ENCODE measurements at regions of chr10 and their contacts with region 1.

Region 1: DNA sequence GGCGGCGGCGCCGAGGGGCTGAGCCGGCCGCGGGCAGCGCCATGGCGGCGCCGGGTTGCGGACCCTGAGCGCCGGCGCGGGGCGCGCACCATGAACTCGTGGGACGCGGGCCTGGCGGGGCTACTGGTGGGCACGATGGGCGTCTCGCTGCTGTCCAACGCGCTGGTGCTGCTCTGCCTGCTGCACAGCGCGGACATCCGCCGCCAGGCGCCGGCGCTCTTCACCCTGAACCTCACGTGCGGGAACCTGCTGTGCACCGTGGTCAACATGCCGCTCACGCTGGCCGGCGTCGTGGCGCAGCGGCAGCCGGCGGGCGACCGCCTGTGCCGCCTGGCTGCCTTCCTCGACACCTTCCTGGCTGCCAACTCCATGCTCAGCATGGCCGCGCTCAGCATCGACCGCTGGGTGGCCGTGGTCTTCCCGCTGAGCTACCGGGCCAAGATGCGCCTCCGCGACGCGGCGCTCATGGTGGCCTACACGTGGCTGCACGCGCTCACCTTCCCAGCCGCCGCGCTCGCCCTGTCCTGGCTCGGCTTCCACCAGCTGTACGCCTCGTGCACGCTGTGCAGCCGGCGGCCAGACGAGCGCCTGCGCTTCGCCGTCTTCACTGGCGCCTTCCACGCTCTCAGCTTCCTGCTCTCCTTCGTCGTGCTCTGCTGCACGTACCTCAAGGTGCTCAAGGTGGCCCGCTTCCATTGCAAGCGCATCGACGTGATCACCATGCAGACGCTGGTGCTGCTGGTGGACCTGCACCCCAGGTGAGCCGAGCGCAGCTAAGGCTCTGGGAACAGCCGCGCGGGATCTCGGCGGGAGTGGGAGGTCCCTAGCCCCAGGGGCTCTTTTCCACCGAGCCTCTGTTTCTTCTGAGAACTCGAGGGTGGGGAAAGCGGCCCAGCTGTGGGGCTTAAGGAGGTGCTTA is at the start of gene GPR26:
- DNase-seq: peak in 1 of 2 experiments; percentile 64
- H3K4me3 ChIP-seq: peak within 1 kb of the TSS; percentile 11 to 62 (median 30)
- H3K27ac ChIP-seq: no peak within 1 kb of the TSS
- H3K4me1 ChIP-seq: peaks cover 0 to 15% (median 4%) of the 10 kb centered on the region in 4 experiments; a peak in 4 of 7 replicates
- H3K27me3 ChIP-seq: peaks cover 20 to 45% (median 40%) of the 10 kb centered on the region in 4 experiments
- CTCF ChIP-seq: peak in 2 of 3 experiments; percentile 5 to 10; a peak in 1 of 4 replicates
- EP300 ChIP-seq: no peak
- POLR2A ChIP-seq: no peak
- RAD21 ChIP-seq: peak; percentile 13 to 32; a peak in 1 of 4 replicates
- total RNA-seq, gene GPR26: 0.09 and 0.10 TPM in 2 replicates

Region 2: GRCh38 chr10:123573236-123574108 is 93.1 kb before region 1 on chr10:
- CTCF ChIA-PET with region 1: interaction called, 401 read pairs
- POLR2A ChIA-PET with region 1: no interaction called
- DNase-seq: peak; percentile 73 to 92
- H3K4me3 ChIP-seq: no peak overlapping the region
- H3K27ac ChIP-seq: no peak overlapping the region
- H3K4me1 ChIP-seq: peaks cover 0 to 3% (median under 1%) of the 10 kb centered on the region in 4 experiments; a peak in 2 of 7 replicates
- H3K27me3 ChIP-seq: no peaks in the 10 kb centered on the region; a peak in 1 of 7 replicates
- CTCF ChIP-seq: peak; percentile 92 to 99 (median 97)
- EP300 ChIP-seq: no peak
- POLR2A ChIP-seq: no peak
- RAD21 ChIP-seq: peak; percentile 76 to 83

Region 3: GRCh38 chr10:123642293-123642692 is 24.3 kb before region 1 on chr10:
- CTCF ChIA-PET with region 1: interaction called, 58 read pairs
- POLR2A ChIA-PET with region 1: interaction called, 3 read pairs
- DNase-seq: no peak
- H3K4me3 ChIP-seq: no peak overlapping the region
- H3K27ac ChIP-seq: no peak overlapping the region
- H3K4me1 ChIP-seq: peaks cover 5 to 25% (median 13%) of the 10 kb centered on the region in 4 experiments
- H3K27me3 ChIP-seq: no peaks in the 10 kb centered on the region; a peak in 1 of 7 replicates
- CTCF ChIP-seq: peak in 1 of 3 experiments; percentile 1; a peak in 1 of 4 replicates
- EP300 ChIP-seq: no peak
- POLR2A ChIP-seq: no peak
- RAD21 ChIP-seq: peak in 1 of 2 experiments; percentile 21; a peak in 2 of 4 replicates

Region 4: DNA sequence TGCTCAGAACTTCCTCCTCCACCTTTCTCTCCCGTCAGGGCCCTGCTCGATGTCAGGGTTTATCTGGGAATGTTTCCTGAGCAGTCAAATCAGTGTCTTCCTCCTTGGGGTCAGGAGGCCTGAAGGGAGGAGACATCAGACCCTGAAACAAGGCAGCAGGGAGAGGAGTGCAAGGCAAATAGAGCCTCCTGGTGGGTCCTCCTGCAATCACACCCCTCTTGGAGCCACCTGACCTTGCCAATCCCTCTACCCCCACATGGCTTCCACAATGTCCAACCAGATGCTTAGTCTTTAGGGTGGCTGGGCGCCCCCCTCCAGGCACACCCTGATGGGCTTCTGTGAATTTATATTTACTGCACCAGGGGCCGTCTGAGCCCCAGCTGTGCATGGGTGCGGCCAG is 11.8 kb after region 1 on chr10:
- CTCF ChIA-PET with region 1: interaction called, 25 read pairs
- POLR2A ChIA-PET with region 1: interaction called, 3 read pairs
- DNase-seq: no peak
- H3K4me3 ChIP-seq: no peak overlapping the region
- H3K27ac ChIP-seq: no peak overlapping the region
- H3K4me1 ChIP-seq: no peaks in the 10 kb centered on the region
- H3K27me3 ChIP-seq: no peaks in the 10 kb centered on the region; a peak in 2 of 7 replicates
- CTCF ChIP-seq: peak; percentile 56 to 62 (median 62)
- EP300 ChIP-seq: no peak
- POLR2A ChIP-seq: no peak
- RAD21 ChIP-seq: peak; percentile 52 to 65

Region 5: DNA sequence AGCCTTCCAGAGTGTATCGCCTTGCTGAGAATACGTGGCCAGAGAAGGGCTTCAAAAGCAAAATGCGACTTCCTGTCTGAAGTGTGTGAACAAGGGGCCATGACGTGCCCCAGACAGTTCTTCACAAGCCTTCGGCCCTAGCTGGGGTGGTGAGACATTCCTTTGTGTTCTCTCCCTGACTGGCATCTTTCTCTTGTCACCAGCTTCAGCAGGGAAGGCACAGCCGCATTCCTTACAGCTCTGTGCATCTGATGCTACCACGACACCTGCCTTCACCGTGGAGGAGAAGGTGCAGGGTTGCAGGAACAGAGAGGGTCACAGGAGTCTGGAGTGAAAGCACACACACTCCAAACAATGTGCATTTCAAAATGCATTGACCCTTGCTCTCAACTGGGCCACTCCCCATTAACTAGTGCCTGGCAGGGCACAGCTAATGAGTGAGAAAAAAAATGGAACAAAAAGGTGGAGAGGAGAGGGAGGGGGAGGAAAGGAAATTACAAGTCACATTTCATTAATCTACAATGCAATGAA is 93.0 kb after region 1 on chr10:
- CTCF ChIA-PET with region 1: no interaction called
- POLR2A ChIA-PET with region 1: no interaction called
- DNase-seq: no peak
- H3K4me3 ChIP-seq: no peak overlapping the region
- H3K27ac ChIP-seq: no peak overlapping the region
- H3K4me1 ChIP-seq: peaks cover 1 to 17% (median 10%) of the 10 kb centered on the region in 4 experiments; a peak in 6 of 7 replicates
- H3K27me3 ChIP-seq: no peaks in the 10 kb centered on the region
- CTCF ChIP-seq: no peak
- EP300 ChIP-seq: no peak
- POLR2A ChIP-seq: no peak
- RAD21 ChIP-seq: no peak

Region 6: DNA sequence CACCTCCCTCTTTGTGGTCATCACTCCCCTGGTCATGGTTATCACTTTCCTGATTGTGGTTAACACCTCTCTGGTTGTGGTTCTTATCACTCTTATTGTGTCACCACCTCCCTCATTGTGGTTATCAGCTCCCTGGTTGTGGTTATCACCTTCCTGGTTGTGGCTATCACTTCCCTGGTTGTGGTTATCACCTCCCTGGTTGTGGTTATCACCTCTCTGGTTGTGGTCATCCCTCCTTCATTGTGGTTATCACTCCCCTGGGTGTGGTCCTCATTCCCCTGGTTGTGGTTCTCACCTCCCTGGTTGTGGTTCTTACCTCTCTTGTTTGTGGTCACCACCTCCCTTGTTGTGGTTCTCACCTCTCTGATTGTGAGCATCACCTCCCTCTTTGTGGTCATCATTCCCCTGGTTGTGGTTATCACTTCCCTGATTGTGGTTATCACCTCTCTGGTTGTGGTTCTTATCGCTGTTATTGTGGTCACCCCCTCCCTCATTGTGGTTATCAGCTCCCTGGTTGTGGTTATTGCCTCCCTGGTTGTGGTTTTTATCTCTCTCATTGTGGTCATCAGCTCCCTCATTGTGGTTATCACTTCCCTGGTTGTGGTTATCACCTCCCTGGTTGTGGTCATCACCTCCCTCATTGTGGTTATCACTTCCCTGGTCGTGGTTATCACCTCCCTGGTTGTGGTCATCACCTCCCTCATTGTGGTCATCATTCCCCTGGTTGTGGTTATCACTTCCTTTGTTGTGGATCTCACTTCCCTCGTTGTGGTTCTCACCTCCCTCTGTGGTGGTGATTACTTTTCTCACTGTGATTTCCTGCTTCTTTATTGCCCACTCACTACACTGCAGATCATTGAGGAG is 106.3 kb after region 1 on chr10:
- CTCF ChIA-PET with region 1: no interaction called
- POLR2A ChIA-PET with region 1: no interaction called
- DNase-seq: no peak
- H3K4me3 ChIP-seq: no peak overlapping the region
- H3K27ac ChIP-seq: no peak overlapping the region
- H3K4me1 ChIP-seq: no peaks in the 10 kb centered on the region; a peak in 1 of 7 replicates
- H3K27me3 ChIP-seq: no peaks in the 10 kb centered on the region
- CTCF ChIP-seq: no peak
- EP300 ChIP-seq: no peak
- POLR2A ChIP-seq: no peak
- RAD21 ChIP-seq: no peak

Region 7: GRCh38 chr10:123967396-123968243 is 301.0 kb after region 1 on chr10:
- CTCF ChIA-PET with region 1: interaction called, 76 read pairs
- POLR2A ChIA-PET with region 1: no interaction called
- DNase-seq: peak; percentile 63 to 95
- H3K4me3 ChIP-seq: no peak overlapping the region
- H3K27ac ChIP-seq: no peak overlapping the region
- H3K4me1 ChIP-seq: peaks cover 2 to 20% (median 8%) of the 10 kb centered on the region in 4 experiments
- H3K27me3 ChIP-seq: peaks cover 0 to 8% (median 5%) of the 10 kb centered on the region in 4 experiments; a peak in 3 of 7 replicates
- CTCF ChIP-seq: peak; percentile 89 to 95 (median 91)
- EP300 ChIP-seq: no peak
- POLR2A ChIP-seq: no peak
- RAD21 ChIP-seq: peak; percentile 99

Measured in H1 (cell line).